ENCODE measurements at regions of chr6 and their contacts with region 1.

Region 1: DNA sequence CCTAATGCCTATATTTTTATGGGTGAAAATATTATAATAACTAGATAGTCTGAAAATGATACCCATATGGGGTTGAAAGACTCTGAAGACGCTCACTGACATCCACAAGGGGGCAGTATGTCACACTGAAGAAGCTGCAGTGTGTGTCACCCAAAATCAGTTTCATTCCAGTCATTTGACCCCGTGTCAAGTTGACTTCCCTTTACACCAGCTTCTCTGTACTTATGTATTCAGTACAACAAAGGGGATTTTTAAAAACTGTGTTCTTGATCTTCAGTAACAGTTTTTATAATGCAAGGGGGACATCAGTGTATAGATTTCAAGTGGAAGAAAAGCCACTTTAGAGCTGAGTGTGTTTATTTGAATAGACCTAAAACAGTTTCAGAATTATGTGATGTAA is 19.3 kb downstream of the FAXC start:
- DNase-seq: peak in 2 of 5 donors; percentile 22 to 29
- ATAC-seq: peak in 3 of 4 donors; percentile 42 to 53 (median 50)
- H3K4me3 ChIP-seq: no peak overlapping the region
- H3K27ac ChIP-seq: no peak overlapping the region
- H3K4me1 ChIP-seq: no peaks in the 10 kb centered on the region
- H3K27me3 ChIP-seq: peaks cover 0 to 6% (median 0%) of the 10 kb centered on the region in 9 donors
- CTCF ChIP-seq: peak; percentile 44 to 82 (median 66)
- POLR2A ChIP-seq: no peak

Region 2: DNA sequence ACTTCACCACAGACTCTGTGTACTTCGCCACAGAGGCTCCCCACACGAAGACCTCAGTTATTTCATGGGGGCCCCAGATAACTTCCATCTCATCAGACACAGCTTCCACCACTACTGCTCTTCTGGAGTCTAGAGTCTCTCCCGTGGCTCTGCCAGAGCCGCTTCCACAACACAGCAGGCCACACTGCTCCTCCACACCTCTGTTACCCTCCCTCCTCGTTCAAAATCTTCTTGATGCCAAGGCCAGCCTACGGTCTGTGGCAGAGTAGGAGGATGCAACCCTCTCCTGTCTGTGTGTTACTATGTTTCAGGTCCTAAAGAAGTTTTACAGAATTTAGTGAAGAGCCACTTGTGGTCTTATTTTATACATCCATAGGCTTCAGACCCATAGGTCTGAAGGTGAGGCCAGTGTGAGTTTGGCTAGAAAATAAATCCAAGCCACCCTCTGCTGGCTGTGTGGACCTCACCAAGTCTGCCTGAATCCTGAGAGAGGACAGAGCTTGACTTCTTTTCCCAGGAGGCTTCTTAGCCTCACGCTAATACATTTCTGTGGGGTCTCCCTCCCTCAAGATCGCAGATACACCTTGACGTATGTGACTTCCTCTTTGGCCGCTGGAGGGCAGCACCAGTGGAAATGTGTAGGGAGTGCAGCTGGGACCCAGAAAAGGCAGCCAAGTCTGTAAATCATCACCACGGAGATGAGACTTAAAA is 178.4 kb before region 1 on chr6:
- intact Hi-C with region 1: no loop called
- DNase-seq: peak in 2 of 5 donors; percentile 13 to 44
- ATAC-seq: peak in 2 of 4 donors; percentile 59 to 61
- H3K4me3 ChIP-seq: no peak overlapping the region
- H3K27ac ChIP-seq: no peak overlapping the region
- H3K4me1 ChIP-seq: no peaks in the 10 kb centered on the region
- H3K27me3 ChIP-seq: peaks cover 0 to 5% (median 0%) of the 10 kb centered on the region in 9 donors
- CTCF ChIP-seq: peak; percentile 19 to 58 (median 39)
- POLR2A ChIP-seq: no peak

Region 3: DNA sequence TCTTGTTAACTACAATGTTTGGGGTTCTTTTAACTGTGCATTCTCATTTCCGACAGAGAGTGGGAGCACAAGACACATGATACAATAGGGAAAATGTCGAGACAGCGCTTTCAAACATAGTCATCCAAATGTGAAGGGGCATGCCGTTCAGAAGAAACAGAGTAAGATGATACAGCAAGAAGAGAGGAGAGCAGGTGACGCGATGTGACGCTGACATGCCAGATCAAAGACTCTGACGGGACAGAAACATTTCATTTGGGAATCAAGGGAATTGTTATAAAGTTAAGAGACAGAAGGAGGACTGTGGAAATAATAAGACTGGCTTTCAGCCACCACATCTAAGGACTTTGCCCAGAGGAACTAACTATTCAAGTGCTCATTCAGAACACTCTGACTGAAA is 98.1 kb before region 1 on chr6:
- intact Hi-C with region 1: no loop called
- DNase-seq: no peak
- ATAC-seq: no peak
- H3K4me3 ChIP-seq: no peak overlapping the region
- H3K27ac ChIP-seq: no peak overlapping the region
- H3K4me1 ChIP-seq: no peaks in the 10 kb centered on the region
- H3K27me3 ChIP-seq: peaks cover 0 to 29% (median 0%) of the 10 kb centered on the region in 9 donors
- CTCF ChIP-seq: no peak
- POLR2A ChIP-seq: no peak

Region 4: DNA sequence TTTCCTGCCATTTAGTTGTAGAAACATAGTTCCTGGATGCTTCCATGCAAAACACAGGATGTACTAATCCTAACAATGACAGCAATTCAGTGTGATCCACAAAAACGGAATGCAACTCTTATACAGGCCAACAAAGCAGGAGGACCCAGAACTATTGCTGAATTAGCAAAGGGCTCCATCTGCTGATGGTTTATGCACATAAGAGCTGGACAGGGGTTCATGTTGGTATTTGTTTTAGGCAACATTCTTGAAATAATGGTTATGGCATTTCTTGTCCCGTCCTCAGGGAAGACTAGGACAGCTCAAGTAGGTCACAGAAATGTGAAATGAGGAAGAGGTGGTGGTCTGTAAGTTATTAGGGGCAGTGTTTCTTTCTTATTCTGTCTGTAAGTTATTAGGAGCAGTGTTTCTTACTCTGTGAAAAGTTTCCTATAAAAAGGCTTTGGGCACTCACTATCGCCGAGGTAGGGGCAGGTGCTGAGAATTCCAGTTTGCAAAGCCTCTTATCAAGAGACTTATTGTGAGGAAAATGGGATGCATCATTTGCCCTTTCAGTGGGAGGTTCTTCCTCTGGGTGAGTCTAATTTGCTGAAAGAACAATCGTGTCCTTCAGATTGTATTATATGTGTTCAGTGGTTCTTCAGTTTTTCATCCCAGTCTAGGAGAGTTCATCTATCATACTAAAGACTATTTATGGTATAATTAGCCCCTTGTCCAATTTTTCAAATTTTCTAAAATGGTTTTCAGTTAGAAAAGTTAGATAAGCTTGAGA is 492.8 kb after region 1 on chr6:
- intact Hi-C with region 1: loop called in 1 of 10 experiments (anchors 5 kb)
- DNase-seq: no peak
- ATAC-seq: peak in 1 of 4 donors; percentile 47
- H3K4me3 ChIP-seq: no peak overlapping the region
- H3K27ac ChIP-seq: no peak overlapping the region
- H3K4me1 ChIP-seq: peaks cover 0 to 4% (median 0%) of the 10 kb centered on the region in 12 donors
- H3K27me3 ChIP-seq: peaks cover 0 to 18% (median 0%) of the 10 kb centered on the region in 9 donors
- CTCF ChIP-seq: peak in 8 of 12 donors; percentile 19 to 47 (median 29)
- POLR2A ChIP-seq: no peak

Measured in heart left ventricle (tissue), 16 donors.